PC-9 (cell line): ENCODE measurements at regions of chr15 and their contacts with region 1.

Region 1: GRCh38 chr15:97995881-97996603 is 35.5 kb downstream of the ARRDC4 start:
- DNase-seq: peak; percentile 22 to 60
- H3K4me3 ChIP-seq: peak overlapping the region; percentile 28; the same call in 1 of the 2 replicates
- H3K27ac ChIP-seq: no peak overlapping the region
- H3K4me1 ChIP-seq: no peaks in the 10 kb centered on the region
- H3K27me3 ChIP-seq: no peaks in the 10 kb centered on the region
- CTCF ChIP-seq: no peak; the same call in 1 of the 2 replicates

Region 2: DNA sequence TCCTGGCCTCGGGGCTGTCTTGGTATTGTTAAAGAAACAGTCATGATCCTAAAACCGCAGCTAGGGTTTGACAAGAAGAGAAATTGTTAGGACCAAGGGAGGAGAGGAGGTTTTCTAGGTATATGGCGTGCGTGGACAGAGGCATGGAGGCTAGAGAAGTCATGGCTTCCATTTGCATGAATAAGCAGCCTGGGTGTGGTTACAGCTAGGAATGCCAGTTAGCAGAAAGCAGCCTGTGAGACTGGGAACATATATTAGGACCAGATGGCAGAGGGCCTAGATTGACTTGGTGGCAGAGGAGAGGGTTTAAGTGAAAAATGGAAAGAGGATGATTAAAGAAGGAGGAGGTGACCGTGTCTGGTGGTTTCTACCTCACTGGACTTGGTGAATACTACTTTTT is 609.1 kb before region 1 on chr15:
- CTCF ChIA-PET with region 1: no interaction called
- POLR2A ChIA-PET with region 1: no interaction called
- intact Hi-C with region 1: no loop called
- DNase-seq: no peak
- H3K4me3 ChIP-seq: no peak overlapping the region
- H3K27ac ChIP-seq: no peak overlapping the region
- H3K4me1 ChIP-seq: no peaks in the 10 kb centered on the region
- H3K27me3 ChIP-seq: no peaks in the 10 kb centered on the region
- CTCF ChIP-seq: no peak

Region 3: DNA sequence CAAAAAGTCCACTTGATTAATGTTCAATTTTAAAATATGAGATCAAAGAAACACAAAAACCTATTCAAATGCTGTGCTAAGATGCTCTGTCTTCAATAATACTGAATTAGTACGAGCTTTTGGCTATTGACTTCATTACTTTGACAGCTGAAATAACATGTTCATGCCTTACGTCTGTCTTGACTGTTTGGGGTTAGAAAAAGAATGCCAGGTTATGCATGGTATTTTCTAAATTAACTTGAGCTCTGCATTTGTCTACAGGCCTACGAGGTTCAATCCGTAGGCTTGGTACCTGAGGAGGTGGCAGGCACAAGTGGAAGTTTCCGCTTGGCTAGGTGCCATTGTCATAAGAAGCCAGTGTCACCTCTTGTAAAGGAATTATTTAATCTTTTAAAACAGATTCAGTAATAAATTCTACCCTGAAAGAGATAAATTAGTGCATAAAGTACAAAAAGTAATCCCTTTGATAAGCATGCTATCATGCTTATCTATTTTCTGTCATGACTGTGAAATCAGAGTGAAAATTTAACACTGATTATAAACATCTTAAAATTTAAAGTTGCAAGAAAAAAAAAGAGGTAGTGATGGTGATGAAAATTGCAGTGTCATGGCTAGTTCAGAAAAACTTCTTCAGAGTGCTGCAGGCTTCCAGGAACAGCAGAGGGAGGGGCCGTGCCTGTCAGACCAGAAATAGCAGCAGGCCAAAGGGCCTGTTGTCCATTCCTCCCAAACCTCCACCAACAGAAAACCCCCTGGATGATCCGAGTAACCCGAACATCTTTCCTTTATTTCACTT is 80.2 kb after region 1 on chr15:
- CTCF ChIA-PET with region 1: no interaction called
- POLR2A ChIA-PET with region 1: no interaction called
- intact Hi-C with region 1: loop called (anchors 10 kb)
- DNase-seq: peak in 1 of 2 experiments; percentile 31
- H3K4me3 ChIP-seq: no peak overlapping the region
- H3K27ac ChIP-seq: no peak overlapping the region
- H3K4me1 ChIP-seq: no peaks in the 10 kb centered on the region; the same call in 1 of the 2 replicates
- H3K27me3 ChIP-seq: no peaks in the 10 kb centered on the region
- CTCF ChIP-seq: no peak